ENCODE measurements at regions of chr10 and their contacts with region 1.

Region 1: DNA sequence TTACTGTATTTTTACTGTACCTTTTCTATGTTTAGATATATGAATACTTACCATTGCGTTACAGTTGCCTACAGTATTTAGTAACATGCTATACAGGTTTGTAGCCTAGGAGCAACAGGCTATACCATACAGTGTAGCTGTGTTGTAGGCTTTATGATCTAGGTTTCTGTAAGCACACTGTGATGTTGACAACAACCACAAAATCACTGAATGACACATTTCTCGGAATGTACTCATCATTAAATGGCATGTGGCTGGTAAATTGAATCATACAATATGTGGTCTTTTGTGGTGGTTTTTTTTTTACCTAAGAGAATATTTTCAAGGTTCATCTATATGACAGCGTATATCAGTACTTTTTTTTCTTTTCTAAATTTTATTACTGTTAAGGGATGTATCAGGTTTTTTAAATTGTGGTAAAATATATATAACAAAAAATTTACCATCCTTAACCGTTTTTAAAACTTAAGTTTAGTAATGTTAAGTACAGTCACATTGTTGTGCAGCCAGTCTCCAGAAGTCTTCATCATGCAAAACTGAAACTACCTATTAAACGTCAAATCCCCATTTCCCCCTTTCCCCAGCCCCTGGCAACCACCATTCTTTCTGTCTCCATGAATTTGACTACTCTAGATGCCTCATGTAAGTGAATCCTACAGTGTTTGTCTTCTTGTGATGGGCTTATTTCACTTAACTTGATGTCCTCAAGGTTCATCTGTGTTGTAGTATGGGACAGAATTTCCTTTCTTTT is 21.5 kb downstream of the BTAF1 start:
- DNase-seq: peak; percentile 36
- ATAC-seq: peak; percentile 98
- H3K4me3 Mint-ChIP-seq: no peak overlapping the region
- H3K27ac Mint-ChIP-seq: peak overlapping the region; percentile 77
- H3K4me1 Mint-ChIP-seq: peaks cover 24% of the 10 kb centered on the region
- H3K27me3 Mint-ChIP-seq: no peaks in the 10 kb centered on the region

Region 2: DNA sequence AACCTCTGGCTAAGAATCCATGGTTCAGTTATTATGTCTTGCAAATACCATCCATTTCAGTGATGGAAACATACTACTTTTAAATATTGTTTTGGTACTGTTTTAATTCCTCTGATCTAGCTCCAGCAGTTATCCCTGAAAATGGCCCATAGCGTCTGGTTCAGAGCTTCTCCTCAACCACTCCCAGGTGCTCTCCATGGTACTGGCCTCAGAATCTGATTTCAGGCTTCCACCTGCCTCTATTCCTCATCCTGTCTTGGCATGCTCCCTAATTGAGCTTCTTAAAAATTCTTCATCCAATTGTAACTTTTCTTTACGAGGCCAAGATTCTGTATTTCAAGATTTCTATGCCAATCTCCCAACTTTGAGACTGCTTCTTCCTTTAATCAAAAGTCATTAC is 1323.5 kb before region 1 on chr10:
- CTCF ChIA-PET with region 1: no interaction called
- POLR2A ChIA-PET with region 1: no interaction called
- intact Hi-C with region 1: no loop called
- DNase-seq: no peak
- ATAC-seq: no peak
- H3K4me3 Mint-ChIP-seq: no peak overlapping the region
- H3K27ac Mint-ChIP-seq: no peak overlapping the region
- H3K4me1 Mint-ChIP-seq: no peaks in the 10 kb centered on the region
- H3K27me3 Mint-ChIP-seq: peaks cover 9% of the 10 kb centered on the region

Region 3: DNA sequence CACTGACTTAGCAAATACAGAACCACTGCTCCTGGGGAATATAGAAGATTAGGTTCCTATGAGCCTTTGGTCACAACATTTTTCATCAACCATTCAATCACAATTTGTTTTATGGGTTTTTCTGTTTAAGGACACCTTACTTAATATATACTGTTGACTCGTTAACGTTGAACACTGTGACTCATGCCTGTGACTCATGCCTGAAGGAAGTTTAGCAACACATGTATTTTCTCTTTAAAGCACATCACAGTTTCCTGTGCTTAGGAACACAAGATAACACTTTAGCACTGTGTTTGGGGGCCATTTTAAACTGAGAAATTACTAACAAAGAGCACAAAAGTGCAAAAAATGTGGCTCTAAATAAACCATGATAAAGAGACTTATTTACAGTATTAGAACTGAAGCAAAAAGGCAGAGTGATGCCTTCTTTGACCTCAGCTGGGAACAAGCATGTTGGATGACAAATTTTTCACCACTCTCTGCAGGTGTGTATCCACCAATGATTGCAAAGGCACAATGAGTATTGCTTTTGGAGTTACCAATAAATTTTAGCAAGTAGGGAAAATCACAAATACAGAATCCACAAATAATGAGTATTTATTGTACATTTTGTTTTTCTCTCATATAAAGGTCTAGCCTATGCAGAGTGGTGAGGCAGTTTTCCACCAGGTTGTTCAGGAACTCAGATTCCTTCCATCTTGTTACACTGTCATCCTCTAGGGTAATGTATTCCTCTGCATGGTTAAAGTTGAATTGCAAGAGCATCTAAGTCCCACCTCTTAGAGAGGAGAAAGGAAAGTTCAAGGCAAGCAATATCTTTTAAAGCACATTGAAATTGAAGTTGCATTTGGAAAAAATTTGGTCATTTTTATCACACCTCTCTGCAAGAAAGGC is 43.0 kb before region 1 on chr10:
- CTCF ChIA-PET with region 1: no interaction called
- POLR2A ChIA-PET with region 1: no interaction called
- intact Hi-C with region 1: loop called in 1 of 2 experiments (anchors 1 kb)
- DNase-seq: peak; percentile 80
- ATAC-seq: peak; percentile 100
- H3K4me3 Mint-ChIP-seq: no peak overlapping the region
- H3K27ac Mint-ChIP-seq: peak overlapping the region; percentile 82
- H3K4me1 Mint-ChIP-seq: peaks cover 25% of the 10 kb centered on the region
- H3K27me3 Mint-ChIP-seq: no peaks in the 10 kb centered on the region

Region 4: DNA sequence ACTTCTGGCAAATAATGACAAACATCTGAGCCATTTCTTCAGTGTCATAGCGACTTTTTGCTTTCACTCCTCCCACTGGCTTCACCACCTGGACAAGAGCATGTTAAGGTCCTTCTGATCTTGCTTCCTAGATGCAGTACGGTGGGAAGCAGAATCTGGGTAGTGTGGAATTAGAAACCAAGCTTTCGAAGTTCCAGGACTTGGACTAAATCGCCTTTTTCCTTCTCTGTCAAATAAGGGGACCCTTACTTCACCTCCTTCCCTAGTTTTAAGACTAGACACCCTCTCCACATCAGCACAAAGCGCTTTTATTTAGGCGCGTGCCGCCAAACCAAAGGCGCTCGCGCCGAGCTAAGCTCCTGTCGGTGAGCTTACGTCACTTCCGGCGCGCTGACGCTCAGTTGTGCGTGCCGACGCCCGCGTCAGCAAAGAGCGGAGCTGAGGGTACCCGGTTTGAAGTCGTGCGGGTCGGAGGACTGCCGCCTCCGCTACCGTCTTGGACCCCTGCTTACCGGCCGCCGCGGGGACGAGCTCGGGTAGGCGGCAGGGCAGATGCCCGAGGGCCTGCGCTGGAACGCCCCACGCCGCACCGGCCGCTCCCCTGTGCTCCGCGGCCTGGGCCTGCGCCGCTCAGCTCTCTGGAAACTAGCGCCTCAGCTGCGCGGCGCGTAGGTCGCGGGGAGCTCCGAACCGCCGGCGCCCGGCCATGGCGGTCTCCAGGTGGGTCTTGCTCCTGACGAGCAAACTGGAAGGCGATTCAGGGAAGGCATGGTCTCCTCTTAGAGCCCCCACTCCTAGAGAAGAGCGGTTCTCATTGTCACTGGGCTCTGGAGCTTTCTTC is 21.5 kb before region 1 on chr10 and contains the start of gene BTAF1:
- CTCF ChIA-PET with region 1: interaction called, 4 read pairs
- POLR2A ChIA-PET with region 1: interaction called, 4 read pairs
- intact Hi-C with region 1: loop called (anchors 1 to 2 kb)
- DNase-seq: peak; percentile 96
- ATAC-seq: peak; percentile 96
- H3K4me3 Mint-ChIP-seq: peak within 1 kb of the TSS; percentile 97
- H3K27ac Mint-ChIP-seq: peak within 1 kb of the TSS; percentile 99
- H3K4me1 Mint-ChIP-seq: peaks cover 37% of the 10 kb centered on the region
- H3K27me3 Mint-ChIP-seq: peaks cover 2% of the 10 kb centered on the region
- total RNA-seq, gene BTAF1: 59.0 to 59.4 TPM

Region 5: DNA sequence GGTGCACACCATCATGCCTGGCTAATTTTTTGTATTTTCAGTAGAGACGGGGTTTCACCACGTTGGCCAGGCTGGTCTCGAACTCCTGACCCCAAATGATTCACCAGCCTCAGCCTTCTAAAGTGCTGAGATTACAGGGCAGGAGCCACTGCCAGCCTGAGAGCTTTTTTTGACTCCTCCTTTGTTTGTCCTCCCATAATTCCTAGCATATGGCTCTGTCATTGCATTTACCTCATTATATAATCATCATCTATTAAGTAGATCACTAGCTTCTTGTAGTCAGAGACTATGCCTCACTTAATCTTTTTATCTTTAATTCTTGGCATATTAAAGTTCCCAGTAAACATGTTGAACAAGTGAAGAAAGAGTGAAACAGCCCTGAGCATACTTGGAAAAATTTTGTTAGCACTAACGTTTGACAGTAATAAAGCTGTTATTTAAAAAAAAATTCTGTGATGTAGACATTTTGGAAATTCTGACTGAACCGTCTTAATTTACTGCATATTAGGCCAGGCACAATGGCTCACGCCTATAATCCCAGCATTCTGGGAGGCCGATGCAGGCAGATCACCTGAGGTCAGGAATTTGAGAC is 263.8 kb after region 1 on chr10:
- CTCF ChIA-PET with region 1: no interaction called
- POLR2A ChIA-PET with region 1: no interaction called
- intact Hi-C with region 1: loop called in 1 of 2 experiments (anchors 5 kb)
- DNase-seq: peak; percentile 8
- ATAC-seq: no peak
- H3K4me3 Mint-ChIP-seq: no peak overlapping the region
- H3K27ac Mint-ChIP-seq: no peak overlapping the region
- H3K4me1 Mint-ChIP-seq: peaks cover 12% of the 10 kb centered on the region
- H3K27me3 Mint-ChIP-seq: no peaks in the 10 kb centered on the region